ENCODE measurements at regions of chr7 and their contacts with region 1.

Region 1: GRCh38 chr7:29105752-29106668 is 40.3 kb downstream of the CPVL start:
- DNase-seq: peak in 2 of 10 donors; percentile 22 to 26

Region 2: DNA sequence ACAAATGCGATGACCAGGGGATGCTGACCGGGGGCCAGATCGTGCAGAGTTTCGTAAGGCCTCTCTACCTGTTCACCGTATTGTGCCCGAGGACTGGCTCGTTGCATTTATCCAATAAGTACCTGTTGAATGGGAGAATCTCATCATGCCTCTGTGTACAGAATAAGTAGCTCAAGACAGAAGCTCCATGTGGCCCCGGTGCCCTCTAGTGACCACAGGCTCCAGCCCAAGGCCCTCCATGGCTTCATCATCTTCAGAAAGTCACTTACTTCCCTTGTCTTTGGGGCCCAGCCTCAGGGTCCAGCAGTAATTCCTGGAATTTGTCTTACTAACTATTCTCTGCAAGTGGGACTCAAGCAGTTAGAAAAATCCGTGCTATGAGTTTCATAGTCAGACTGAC is 239.6 kb after region 1 on chr7:
- intact Hi-C with region 1: loop called (anchors 10 kb)
- DNase-seq: peak; percentile 35 to 96 (median 68)

Region 3: DNA sequence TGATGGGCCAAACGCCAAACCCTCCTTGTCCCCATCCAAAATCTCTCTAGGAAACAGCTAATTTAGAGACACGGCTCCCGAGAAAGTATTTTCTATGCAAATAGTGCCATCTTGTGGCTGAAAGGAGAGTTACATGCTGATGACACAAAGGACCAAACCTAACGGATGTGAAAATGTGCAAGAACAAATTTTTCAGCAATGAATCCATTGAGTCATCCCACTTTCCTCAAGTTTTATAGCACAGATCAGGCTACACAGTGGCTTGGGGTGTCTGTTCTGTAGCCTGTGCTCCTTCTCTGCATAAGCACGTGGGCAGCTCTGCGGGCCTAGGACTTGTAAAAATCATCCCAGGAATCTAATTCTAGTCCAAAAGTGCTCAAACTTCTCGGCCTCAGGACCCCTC is 302.8 kb after region 1 on chr7:
- intact Hi-C with region 1: loop called (anchors 5 kb)
- DNase-seq: peak in 3 of 10 donors; percentile 37 to 55 (median 54)